ENCODE measurements at regions of chr5 and their contacts with region 1.

Region 1: DNA sequence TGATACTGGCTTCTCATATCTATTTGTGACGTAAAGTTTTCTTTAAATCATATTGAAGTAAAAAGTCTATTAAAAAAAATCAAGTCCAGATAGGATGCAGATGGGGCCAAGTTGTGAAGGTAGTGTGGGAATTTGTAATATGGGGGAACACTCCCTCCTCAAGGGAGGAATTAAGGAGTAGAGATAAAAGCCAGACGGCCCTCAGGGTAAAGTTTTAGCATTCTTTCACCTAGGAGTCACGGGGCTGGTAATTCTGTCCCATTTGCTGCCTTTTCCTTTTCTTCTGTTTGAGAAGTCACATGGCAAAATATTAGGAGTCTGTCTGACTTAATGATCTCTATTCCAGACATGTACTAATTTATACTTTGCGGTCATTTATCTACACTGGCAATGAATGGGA is 61.8 kb downstream of the SNX24 start:
- DNase-seq: no peak
- ATAC-seq: peak in 1 of 2 donors; percentile 89

Region 2: GRCh38 chr5:123359454-123360200 is 452.4 kb after region 1 on chr5:
- intact Hi-C with region 1: loop called in 1 of 2 experiments (anchors 5 kb)
- DNase-seq: no peak
- ATAC-seq: peak; percentile 78 to 82